Cardiac septum (tissue), 1 donor: ENCODE measurements at regions of chr10 and their contacts with region 1.

Region 1: GRCh38 chr10:18238870-18239485 is 98.8 kb downstream of the CACNB2 start:
- DNase-seq: no peak

Region 2: GRCh38 chr10:17847585-17848296 is 391.2 kb before region 1 on chr10:
- intact Hi-C with region 1: loop called (anchors 5 kb)
- DNase-seq: no peak

Region 3: GRCh38 chr10:18472977-18473376 is 234.0 kb after region 1 on chr10:
- intact Hi-C with region 1: loop called (anchors 10 kb)
- DNase-seq: no peak